ENCODE measurements at regions of chr1 and their contacts with region 1.

Region 1: DNA sequence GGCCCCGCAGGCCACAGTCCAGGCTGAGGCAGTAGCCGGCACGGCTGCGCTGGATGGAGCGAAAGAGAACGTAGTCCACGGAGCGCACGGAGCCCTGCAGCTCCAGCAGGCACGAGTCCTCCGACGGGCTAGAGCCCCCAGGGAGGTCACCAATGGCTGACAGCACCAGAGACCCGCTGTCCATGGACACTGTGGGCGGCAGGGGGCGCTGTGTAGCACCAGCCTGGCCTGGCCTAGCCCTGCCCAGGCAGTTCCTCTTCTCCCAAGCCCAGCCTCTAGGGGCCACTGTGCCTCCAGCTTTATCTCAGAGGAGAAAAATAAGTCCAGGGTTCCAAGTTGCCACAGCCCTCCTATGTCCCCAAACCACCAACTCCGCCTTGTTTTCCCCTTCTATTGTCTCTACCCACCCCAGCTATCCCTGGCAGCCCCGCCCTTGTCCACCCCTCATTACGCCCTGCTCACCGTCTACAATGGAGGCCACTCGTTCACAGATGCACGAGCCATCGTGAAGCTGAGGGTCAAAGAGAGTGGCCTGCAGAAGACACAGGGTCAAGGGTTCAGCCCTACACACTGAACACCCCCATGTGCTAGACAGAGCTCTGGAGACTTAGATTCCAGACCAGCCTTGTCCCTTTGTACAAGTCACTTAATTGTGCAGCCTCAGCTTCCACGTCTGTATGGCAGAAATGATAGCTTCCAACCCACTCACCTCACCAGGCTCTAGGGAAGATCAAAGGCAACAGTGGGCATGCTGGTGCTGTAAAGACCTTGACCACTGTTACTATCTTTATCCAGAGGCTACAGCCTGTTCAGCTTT is 4.4 kb downstream of the ENTREP3 start:
- DNase-seq: peak; percentile 91 to 98
- ATAC-seq: peak; percentile 82 to 92
- H3K4me3 ChIP-seq: no peak overlapping the region
- H3K27ac ChIP-seq: peak overlapping the region in 1 of 2 experiments; percentile 76; a peak in 3 of 6 replicates
- H3K4me1 ChIP-seq: peaks cover 19% of the 10 kb centered on the region
- CTCF ChIP-seq: peak; percentile 99
- EP300 ChIP-seq: no peak
- POLR2A ChIP-seq: no peak
- RAD21 ChIP-seq: peak; percentile 88 to 90

Region 2: GRCh38 chr1:155208541-155209311 is 42.1 kb before region 1 on chr1 and contains the start of gene MTX1:
- CTCF ChIA-PET with region 1: interaction called, 102 read pairs
- POLR2A ChIA-PET with region 1: interaction called, 4 read pairs
- DNase-seq: peak; percentile 76 to 84
- ATAC-seq: peak; percentile 75 to 87
- H3K4me3 ChIP-seq: peak within 1 kb of the TSS; percentile 90
- H3K27ac ChIP-seq: peak within 1 kb of the TSS; percentile 97 to 99
- H3K4me1 ChIP-seq: peaks cover 23% of the 10 kb centered on the region
- CTCF ChIP-seq: no peak
- EP300 ChIP-seq: no peak; a peak in 1 of 5 replicates
- POLR2A ChIP-seq: peak; percentile 52
- RAD21 ChIP-seq: no peak
- polyA plus RNA-seq, gene MTX1: 53.4 and 73.9 TPM in 2 replicates

Region 3: DNA sequence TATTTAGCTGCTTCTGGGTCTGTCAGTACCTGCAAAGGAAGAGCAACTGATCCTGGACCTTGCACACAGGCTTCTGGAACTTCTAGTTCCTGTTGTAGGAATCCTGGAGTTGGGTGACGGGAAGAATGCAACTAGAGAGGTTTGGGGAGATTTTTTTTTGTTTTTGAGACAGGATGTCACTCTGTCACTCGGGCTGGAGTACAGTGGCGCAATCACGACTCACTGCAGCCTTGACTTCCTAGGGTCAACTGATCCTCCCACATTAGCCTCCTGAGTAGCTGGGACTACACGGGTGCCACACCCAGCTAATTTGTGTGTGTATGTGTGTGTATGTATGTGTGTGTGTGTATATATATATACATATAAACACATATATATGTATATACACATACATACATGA is 14.4 kb before region 1 on chr1:
- CTCF ChIA-PET with region 1: interaction called, 43 read pairs
- POLR2A ChIA-PET with region 1: no interaction called
- DNase-seq: no peak
- ATAC-seq: no peak
- H3K4me3 ChIP-seq: no peak overlapping the region
- H3K27ac ChIP-seq: no peak overlapping the region
- H3K4me1 ChIP-seq: peaks cover 8% of the 10 kb centered on the region
- CTCF ChIP-seq: no peak
- EP300 ChIP-seq: no peak
- POLR2A ChIP-seq: no peak
- RAD21 ChIP-seq: no peak

Region 4: DNA sequence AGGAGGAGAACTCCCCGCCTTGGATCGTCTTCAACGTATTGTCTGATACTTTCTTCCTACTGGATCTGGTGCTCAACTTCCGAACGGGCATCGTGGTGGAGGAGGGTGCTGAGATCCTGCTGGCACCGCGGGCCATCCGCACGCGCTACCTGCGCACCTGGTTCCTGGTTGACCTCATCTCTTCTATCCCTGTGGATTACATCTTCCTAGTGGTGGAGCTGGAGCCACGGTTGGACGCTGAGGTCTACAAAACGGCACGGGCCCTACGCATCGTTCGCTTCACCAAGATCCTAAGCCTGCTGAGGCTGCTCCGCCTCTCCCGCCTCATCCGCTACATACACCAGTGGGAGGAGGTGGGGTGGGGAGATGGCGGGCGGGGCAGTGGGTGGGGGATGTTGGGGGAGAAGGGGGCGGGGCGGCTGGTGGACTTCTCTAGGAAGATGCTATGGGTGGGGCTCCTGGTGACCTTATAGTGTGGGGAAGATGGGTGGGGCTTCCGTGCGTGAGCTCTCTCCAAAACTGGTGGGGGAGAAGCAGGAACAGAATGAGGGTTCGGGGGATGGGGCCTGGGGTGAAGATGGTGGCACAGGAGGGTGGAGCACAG is 31.7 kb after region 1 on chr1:
- CTCF ChIA-PET with region 1: interaction called, 31 read pairs
- POLR2A ChIA-PET with region 1: no interaction called
- DNase-seq: no peak
- ATAC-seq: no peak
- H3K4me3 ChIP-seq: no peak overlapping the region
- H3K27ac ChIP-seq: no peak overlapping the region
- H3K4me1 ChIP-seq: peaks cover 9% of the 10 kb centered on the region; the same call in 2 of the 3 replicates
- CTCF ChIP-seq: no peak
- EP300 ChIP-seq: no peak
- POLR2A ChIP-seq: no peak
- RAD21 ChIP-seq: no peak

Region 5: DNA sequence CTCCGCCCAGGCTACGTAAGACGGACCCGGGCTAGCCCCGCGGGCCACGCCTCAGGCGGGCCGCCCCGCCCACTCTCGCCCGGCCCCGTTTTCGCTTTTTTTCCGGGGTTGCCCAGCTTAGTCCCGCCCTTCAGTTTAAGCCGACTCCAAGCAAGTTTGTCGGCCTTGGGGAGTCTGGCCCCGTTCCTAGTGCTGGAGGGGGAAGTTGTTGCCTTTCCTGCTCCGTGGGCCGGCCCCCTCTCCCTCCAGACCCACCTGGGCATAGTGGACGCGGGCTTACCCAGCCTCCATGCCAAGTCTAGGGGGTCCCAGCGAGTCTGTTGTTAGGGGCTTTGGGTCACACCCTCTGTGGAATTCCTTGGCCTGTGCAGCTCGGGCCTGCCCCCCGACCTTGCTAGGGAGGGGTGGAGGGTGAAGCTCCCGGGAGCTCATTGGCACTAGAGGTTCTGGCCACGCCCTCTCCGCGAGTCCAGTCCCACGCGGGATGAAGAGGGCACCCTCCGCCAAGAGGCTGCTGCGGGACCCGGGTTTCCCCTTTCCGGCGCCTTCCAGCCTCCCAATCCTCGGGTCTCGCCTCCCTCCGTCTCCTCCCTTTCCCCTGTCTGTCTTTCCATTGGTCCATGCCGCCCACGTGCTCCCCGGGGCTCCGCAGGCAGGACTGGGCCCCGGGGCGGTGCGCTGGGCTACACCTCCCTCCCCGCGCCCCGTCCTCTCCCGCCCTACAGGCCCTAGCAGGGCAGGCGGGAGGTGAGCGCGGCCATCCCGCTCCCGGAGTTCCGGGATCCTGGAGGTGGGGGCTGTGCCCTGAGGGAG is 73.2 kb after region 1 on chr1:
- CTCF ChIA-PET with region 1: interaction called, 149 read pairs
- POLR2A ChIA-PET with region 1: interaction called, 10 read pairs
- DNase-seq: peak; percentile 97 to 98
- ATAC-seq: peak; percentile 77 to 85
- H3K4me3 ChIP-seq: peak overlapping the region; percentile 71
- H3K27ac ChIP-seq: peak overlapping the region; percentile 94 to 98
- H3K4me1 ChIP-seq: peaks cover 20% of the 10 kb centered on the region
- CTCF ChIP-seq: no peak
- EP300 ChIP-seq: no peak
- POLR2A ChIP-seq: peak; percentile 79
- RAD21 ChIP-seq: no peak

Region 6: GRCh38 chr1:155479205-155479604 is 228.4 kb after region 1 on chr1:
- CTCF ChIA-PET with region 1: no interaction called
- POLR2A ChIA-PET with region 1: no interaction called
- DNase-seq: peak in 1 of 2 experiments; percentile 48
- ATAC-seq: peak; percentile 54 to 80; a peak in 5 of 6 replicates
- H3K4me3 ChIP-seq: no peak overlapping the region
- H3K27ac ChIP-seq: peak overlapping the region in 1 of 2 experiments; percentile 17; a peak in 1 of 6 replicates
- H3K4me1 ChIP-seq: peaks cover 12% of the 10 kb centered on the region; the same call in 2 of the 3 replicates
- CTCF ChIP-seq: no peak
- EP300 ChIP-seq: no peak
- POLR2A ChIP-seq: no peak
- RAD21 ChIP-seq: no peak

Region 7: DNA sequence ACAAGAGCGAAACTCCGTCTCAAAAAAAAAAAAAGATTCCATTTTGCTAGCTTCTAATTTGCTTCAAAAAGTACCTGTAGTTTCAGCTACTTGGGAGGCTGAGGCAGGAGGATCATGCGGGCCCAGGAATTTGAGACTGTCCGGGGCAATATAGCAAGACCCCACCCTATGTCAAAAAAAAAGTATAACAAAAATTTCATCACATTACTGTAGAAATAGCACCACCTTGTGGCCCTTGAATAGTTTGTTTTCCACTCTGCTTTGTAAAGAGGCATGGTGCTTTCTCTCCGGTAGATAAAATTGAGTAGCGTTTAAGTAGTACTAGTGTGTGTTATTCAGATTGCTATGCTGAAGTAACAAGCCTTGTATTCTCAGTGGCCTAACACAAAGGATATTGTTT is 340.9 kb after region 1 on chr1:
- CTCF ChIA-PET with region 1: interaction called, 104 read pairs
- POLR2A ChIA-PET with region 1: no interaction called
- DNase-seq: peak; percentile 40 to 74
- ATAC-seq: peak; percentile 84 to 87; a peak in 5 of 6 replicates
- H3K4me3 ChIP-seq: no peak overlapping the region
- H3K27ac ChIP-seq: no peak overlapping the region
- H3K4me1 ChIP-seq: no peaks in the 10 kb centered on the region
- CTCF ChIP-seq: peak; percentile 88
- EP300 ChIP-seq: no peak
- POLR2A ChIP-seq: no peak
- RAD21 ChIP-seq: peak; percentile 82 to 89

Measured in A549 (cell line).